CD4-positive, alpha-beta T cell (primary cell): ENCODE measurements at regions of chr1 and their contacts with region 1.

Region 1: DNA sequence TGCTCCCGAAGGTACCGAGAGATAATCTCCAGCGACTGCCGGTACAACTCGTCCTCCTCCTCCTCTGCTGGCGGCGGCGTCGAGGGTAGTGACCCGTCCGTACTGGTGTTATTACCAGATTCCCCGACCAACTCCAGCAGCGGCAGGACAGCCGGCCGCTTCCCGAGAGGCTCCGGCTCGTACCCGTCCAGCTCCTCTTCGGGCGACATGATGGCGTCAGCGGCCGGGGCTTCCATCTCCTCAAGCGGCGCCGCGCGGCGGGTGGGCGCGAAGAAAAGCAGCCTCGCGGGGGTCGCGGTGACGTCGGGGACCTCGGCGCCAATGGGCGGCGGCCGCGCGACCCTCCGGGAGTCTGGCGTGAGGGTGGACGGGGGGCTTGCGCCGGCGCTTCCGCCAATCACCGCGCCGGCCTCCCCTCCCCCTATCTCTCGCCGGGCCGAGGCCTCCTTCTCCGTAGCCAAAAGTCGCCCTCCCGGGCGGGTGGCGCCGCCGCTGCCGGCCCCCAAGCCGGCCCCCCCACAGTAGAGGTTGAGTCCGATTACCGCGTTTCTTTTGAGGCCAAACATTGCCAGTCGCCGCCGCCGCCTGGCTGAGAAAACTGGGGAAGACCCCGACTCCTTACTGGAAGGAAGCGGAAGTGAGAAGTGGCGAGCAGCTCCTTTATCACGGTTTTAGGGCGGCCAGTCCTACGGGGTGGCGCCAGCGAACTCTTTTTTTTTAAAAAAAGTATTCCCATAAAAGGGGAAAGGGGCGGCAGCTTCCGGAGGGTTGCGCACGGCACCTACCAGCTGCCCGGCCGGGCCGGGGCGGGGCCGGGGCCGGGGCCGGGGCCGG is at the start of gene MCL1:
- DNase-seq: peak; percentile 70 to 95 (median 82)
- ATAC-seq: peak; percentile 63
- H3K4me3 ChIP-seq: peak within 1 kb of the TSS; percentile 84
- H3K4me3 Mint-ChIP-seq: peak within 1 kb of the TSS; percentile 99
- H3K27ac ChIP-seq: peak within 1 kb of the TSS; percentile 93 to 97
- H3K27ac Mint-ChIP-seq: peak within 1 kb of the TSS; percentile 98
- H3K4me1 ChIP-seq: peaks cover 22% of the 10 kb centered on the region
- H3K4me1 Mint-ChIP-seq: peaks cover 41% of the 10 kb centered on the region
- H3K27me3 ChIP-seq: no peaks in the 10 kb centered on the region
- H3K27me3 Mint-ChIP-seq: no peaks in the 10 kb centered on the region
- CTCF ChIP-seq: no peak
- total RNA-seq, gene MCL1: 737 to 747 TPM

Region 2: DNA sequence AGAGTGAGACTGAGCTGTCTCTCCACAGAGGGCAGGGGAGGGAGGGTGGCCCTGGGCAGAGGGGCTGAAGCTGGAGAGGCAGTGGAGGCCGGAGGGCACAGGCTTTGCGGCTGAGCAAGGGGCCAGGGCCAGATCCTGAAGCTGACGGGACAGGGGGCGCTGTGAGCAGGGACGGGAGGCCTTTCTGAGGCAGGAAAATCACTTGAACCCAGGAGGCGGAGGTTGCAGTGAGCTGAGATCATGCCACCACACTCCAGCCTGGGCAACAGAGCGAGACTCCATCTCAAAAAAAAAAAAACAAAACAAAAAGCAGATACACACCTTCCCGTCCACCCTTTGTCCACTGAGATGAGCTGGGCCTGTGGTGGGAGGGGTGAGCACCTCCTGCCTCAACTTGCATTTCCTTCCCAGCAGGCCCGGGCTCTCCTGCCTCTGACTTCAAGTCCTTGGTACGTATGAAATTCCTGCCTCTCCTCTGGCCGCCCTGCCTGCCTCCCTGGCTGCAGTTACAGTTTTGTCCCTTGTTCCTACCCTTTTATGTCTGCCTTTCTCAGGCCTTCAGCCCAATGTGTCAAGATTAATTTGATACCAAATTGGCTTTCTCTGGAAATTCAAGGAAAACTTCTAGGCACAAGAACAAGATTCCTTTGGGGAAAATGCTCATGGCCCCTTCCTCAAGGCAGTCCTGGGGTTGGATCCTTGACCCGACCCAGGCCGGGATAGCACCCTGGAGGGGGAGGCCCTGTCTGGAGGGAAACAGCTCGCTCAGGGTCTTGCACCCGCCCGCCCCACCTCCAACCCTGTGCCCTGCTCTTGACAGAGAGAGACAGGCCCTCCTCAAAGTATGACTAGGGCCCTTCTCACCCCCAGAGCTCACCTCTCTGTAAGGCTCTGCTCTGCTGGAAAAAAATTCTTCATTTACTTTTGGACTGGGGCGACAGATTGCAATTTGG is 41.2 kb before region 1 on chr1:
- CTCF ChIA-PET with region 1: no interaction called
- POLR2A ChIA-PET with region 1: no interaction called
- intact Hi-C with region 1: no loop called
- DNase-seq: no peak
- ATAC-seq: no peak
- H3K4me3 ChIP-seq: no peak overlapping the region
- H3K4me3 Mint-ChIP-seq: no peak overlapping the region
- H3K27ac ChIP-seq: no peak overlapping the region
- H3K27ac Mint-ChIP-seq: no peak overlapping the region
- H3K4me1 ChIP-seq: no peaks in the 10 kb centered on the region
- H3K4me1 Mint-ChIP-seq: no peaks in the 10 kb centered on the region
- H3K27me3 ChIP-seq: no peaks in the 10 kb centered on the region
- H3K27me3 Mint-ChIP-seq: peaks cover 6% of the 10 kb centered on the region
- CTCF ChIP-seq: no peak

Region 3: GRCh38 chr1:150548632-150549495 is 30.3 kb before region 1 on chr1 and contains the start of gene ADAMTSL4:
- CTCF ChIA-PET with region 1: no interaction called
- POLR2A ChIA-PET with region 1: interaction called, 10 read pairs
- intact Hi-C with region 1: no loop called
- DNase-seq: peak in 4 of 14 experiments; percentile 36 to 70 (median 58)
- ATAC-seq: peak; percentile 76
- H3K4me3 ChIP-seq: peak within 1 kb of the TSS; percentile 49
- H3K4me3 Mint-ChIP-seq: peak within 1 kb of the TSS; percentile 82
- H3K27ac ChIP-seq: no peak within 1 kb of the TSS
- H3K27ac Mint-ChIP-seq: no peak within 1 kb of the TSS
- H3K4me1 ChIP-seq: peaks cover 39% of the 10 kb centered on the region
- H3K4me1 Mint-ChIP-seq: peaks cover 23% of the 10 kb centered on the region
- H3K27me3 ChIP-seq: peaks cover 10 to 15% of the 10 kb centered on the region in 2 experiments
- H3K27me3 Mint-ChIP-seq: peaks cover 34% of the 10 kb centered on the region
- CTCF ChIP-seq: no peak
- total RNA-seq, gene ADAMTSL4: 0.16 to 0.22 TPM

Region 4: GRCh38 chr1:150567717-150568593 is 11.2 kb before region 1 on chr1:
- CTCF ChIA-PET with region 1: interaction called, 183 read pairs
- POLR2A ChIA-PET with region 1: interaction called, 1,538 read pairs
- intact Hi-C with region 1: loop called in 1 of 2 experiments (anchors 1 kb)
- DNase-seq: peak in 5 of 14 experiments; percentile 46 to 68 (median 58)
- ATAC-seq: peak; percentile 15
- H3K4me3 ChIP-seq: peak overlapping the region; percentile 50
- H3K4me3 Mint-ChIP-seq: peak overlapping the region; percentile 83
- H3K27ac ChIP-seq: peak overlapping the region; percentile 59 to 97
- H3K27ac Mint-ChIP-seq: peak overlapping the region; percentile 98
- H3K4me1 ChIP-seq: peaks cover 98% of the 10 kb centered on the region
- H3K4me1 Mint-ChIP-seq: peaks cover 92% of the 10 kb centered on the region
- H3K27me3 ChIP-seq: no peaks in the 10 kb centered on the region
- H3K27me3 Mint-ChIP-seq: no peaks in the 10 kb centered on the region
- CTCF ChIP-seq: no peak

Region 5: DNA sequence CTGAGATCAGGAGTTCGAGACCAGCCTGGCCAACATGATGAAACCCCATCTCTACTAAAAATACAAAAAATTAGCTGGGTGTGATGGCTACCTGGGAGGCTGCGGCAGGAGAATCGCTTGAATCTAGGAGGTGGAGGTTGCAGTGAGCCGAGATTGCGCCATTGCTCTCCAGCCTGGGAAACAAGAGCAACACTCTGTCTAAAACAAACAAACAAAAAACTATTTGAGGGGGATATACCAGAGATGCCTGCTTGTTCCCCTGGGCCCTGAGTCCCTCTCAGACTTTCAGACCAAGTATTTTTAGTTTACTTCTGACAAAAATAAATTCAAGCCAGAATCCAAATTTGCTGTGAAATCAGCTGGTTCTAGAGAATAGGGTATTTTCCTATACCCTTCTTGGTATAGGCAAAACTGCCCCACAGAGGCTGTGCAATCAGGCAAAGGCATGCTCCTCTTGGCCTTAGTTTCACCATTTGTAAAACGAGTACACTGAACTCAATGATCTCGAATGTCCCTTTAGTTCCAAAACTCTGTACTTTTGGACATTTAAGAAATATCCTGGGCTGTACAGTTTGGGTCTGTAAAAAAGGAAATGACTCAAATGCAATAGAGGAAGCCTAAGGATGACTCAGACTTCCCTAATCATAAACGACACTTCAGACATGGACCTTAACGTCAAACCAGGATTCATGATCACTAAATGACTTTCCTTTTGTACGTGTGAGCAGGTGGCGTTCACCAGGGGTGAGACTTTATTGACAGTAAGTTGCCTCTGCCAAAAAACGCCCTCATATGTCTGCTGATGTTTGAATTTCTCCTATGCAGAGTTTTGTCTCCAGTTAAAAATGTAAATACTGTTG is 34.1 kb after region 1 on chr1:
- CTCF ChIA-PET with region 1: interaction called, 8 read pairs
- POLR2A ChIA-PET with region 1: interaction called, 9 read pairs
- intact Hi-C with region 1: loop called in 1 of 2 experiments (anchors 1 kb)
- DNase-seq: peak in 10 of 14 experiments; percentile 16 to 84 (median 35)
- ATAC-seq: peak; percentile 26
- H3K4me3 ChIP-seq: no peak overlapping the region
- H3K4me3 Mint-ChIP-seq: peak overlapping the region; percentile 30
- H3K27ac ChIP-seq: peak overlapping the region; percentile 75 to 76
- H3K27ac Mint-ChIP-seq: peak overlapping the region; percentile 80
- H3K4me1 ChIP-seq: peaks cover 60% of the 10 kb centered on the region
- H3K4me1 Mint-ChIP-seq: peaks cover 55% of the 10 kb centered on the region
- H3K27me3 ChIP-seq: no peaks in the 10 kb centered on the region
- H3K27me3 Mint-ChIP-seq: no peaks in the 10 kb centered on the region
- CTCF ChIP-seq: no peak

Region 6: DNA sequence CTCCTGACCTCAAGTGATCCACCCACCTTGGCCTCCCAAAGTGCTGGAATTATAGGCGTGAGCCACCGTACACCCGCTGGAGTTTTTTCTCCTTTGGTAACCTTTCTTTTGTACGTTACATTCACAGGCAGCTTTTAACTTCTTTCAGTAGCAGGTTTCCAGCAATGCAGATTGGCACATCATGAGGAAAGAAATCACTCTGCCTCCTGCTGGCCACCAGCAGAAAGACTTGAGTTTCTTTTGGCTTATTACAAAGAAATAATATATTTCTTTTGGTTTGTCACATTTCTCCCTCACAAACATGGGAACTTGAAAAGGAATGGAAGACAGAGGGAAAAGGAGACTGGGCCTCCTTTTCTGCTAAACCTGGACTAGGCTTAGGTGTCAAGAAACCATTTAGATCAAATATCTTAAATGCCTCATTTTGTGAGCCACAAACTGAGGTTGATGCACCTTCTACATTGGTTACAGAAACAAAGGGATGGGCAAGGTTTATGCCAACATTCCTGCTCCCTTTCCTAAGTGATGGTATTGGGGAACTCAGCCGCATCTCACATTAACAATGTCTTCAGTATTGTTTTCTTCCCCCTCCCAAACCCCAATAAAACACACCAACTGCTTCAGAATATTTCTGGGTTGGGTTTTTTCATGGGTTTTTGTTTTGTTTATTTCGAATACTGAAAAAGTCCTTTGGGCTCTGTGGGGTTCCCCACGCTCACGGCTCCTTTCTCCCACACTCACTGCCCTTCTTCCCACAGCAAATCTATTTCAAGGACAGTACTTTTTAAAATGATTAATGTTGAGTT is 42.5 kb after region 1 on chr1:
- CTCF ChIA-PET with region 1: interaction called, 8 read pairs
- POLR2A ChIA-PET with region 1: interaction called, 94 read pairs
- intact Hi-C with region 1: loop called in 1 of 2 experiments (anchors 1 kb)
- DNase-seq: peak; percentile 45 to 85 (median 58)
- ATAC-seq: peak; percentile 78
- H3K4me3 ChIP-seq: no peak overlapping the region
- H3K4me3 Mint-ChIP-seq: peak overlapping the region; percentile 4
- H3K27ac ChIP-seq: peak overlapping the region; percentile 23 to 38
- H3K27ac Mint-ChIP-seq: peak overlapping the region; percentile 73
- H3K4me1 ChIP-seq: peaks cover 30% of the 10 kb centered on the region
- H3K4me1 Mint-ChIP-seq: peaks cover 60% of the 10 kb centered on the region
- H3K27me3 ChIP-seq: no peaks in the 10 kb centered on the region
- H3K27me3 Mint-ChIP-seq: no peaks in the 10 kb centered on the region
- CTCF ChIP-seq: peak; percentile 67

Region 7: GRCh38 chr1:150696590-150697524 is 117.7 kb after region 1 on chr1 and contains the start of gene GOLPH3L:
- CTCF ChIA-PET with region 1: no interaction called
- POLR2A ChIA-PET with region 1: interaction called, 14 read pairs
- intact Hi-C with region 1: no loop called
- DNase-seq: peak; percentile 73 to 98 (median 83)
- ATAC-seq: peak; percentile 99
- H3K4me3 ChIP-seq: peak within 1 kb of the TSS; percentile 69
- H3K4me3 Mint-ChIP-seq: peak within 1 kb of the TSS; percentile 94
- H3K27ac ChIP-seq: peak within 1 kb of the TSS; percentile 39 to 62
- H3K27ac Mint-ChIP-seq: peak within 1 kb of the TSS; percentile 88
- H3K4me1 ChIP-seq: no peaks in the 10 kb centered on the region
- H3K4me1 Mint-ChIP-seq: peaks cover 40% of the 10 kb centered on the region
- H3K27me3 ChIP-seq: no peaks in the 10 kb centered on the region
- H3K27me3 Mint-ChIP-seq: peaks cover 4% of the 10 kb centered on the region
- CTCF ChIP-seq: no peak
- total RNA-seq, gene GOLPH3L: 2.4 to 2.6 TPM